Heart left ventricle (tissue), 16 donors: ENCODE measurements at regions of chr17 and their contacts with region 1.

Region 1: DNA sequence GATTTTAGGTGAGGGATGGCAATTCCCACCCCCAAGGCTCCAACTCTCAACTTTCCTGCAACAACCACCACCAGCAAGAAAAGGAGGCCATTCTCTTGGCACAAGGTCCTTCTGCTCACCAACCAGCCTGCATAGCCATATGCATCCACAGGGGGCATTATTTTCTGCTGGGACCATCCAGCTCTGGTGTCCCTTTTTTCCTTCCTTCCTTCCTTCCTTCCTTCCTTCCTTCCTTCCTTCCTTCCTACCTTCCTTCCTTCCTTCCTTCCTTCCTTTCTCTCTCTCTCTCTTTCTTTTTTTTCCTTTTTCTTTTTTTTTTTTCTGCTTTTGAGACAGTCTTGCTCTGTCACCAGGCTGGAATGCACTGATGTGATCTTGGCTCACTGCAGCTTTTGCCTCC is 21.1 kb upstream of the COX10 start:
- DNase-seq: no peak
- ATAC-seq: no peak
- H3K4me3 ChIP-seq: no peak overlapping the region
- H3K27ac ChIP-seq: no peak overlapping the region
- H3K4me1 ChIP-seq: no peaks in the 10 kb centered on the region
- H3K27me3 ChIP-seq: no peaks in the 10 kb centered on the region
- CTCF ChIP-seq: peak in 2 of 12 donors; percentile 23 to 31
- POLR2A ChIP-seq: no peak

Region 2: DNA sequence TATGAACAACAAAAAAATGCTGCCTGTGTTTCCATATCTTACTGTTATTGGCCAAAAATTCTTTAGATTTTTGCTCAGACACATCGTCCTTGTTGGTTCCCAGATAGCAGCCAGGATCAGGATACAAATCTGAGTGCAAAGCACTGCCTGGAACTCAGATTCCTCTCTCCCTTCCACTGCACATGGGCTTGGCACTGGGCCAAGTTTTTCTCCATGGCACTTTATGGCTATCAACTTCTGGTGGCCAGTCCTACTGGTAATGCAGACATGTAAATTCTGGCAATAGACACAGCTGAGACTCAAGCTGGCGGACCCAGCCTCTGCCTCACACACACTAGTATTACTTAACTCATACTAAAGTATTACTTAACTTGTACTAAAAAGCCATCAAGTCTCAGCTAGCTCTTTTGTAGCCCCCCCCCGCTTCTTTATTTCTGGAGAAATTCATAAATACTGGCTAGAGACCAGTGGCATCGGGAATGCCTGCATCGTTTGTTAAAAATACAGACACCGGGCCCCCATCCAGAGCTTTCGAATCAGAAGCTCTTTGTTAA is 160.0 kb before region 1 on chr17:
- intact Hi-C with region 1: no loop called
- DNase-seq: peak in 4 of 5 donors; percentile 26 to 42 (median 32)
- ATAC-seq: no peak
- H3K4me3 ChIP-seq: no peak overlapping the region
- H3K27ac ChIP-seq: no peak overlapping the region
- H3K4me1 ChIP-seq: peaks cover 0 to 14% (median 0%) of the 10 kb centered on the region in 12 donors
- H3K27me3 ChIP-seq: no peaks in the 10 kb centered on the region
- CTCF ChIP-seq: no peak
- POLR2A ChIP-seq: no peak

Region 3: GRCh38 chr17:14004927-14005620 is 43.1 kb before region 1 on chr17:
- intact Hi-C with region 1: no loop called
- DNase-seq: no peak
- ATAC-seq: no peak
- H3K4me3 ChIP-seq: no peak overlapping the region
- H3K27ac ChIP-seq: no peak overlapping the region
- H3K4me1 ChIP-seq: no peaks in the 10 kb centered on the region
- H3K27me3 ChIP-seq: no peaks in the 10 kb centered on the region
- CTCF ChIP-seq: no peak
- POLR2A ChIP-seq: no peak

Region 4: DNA sequence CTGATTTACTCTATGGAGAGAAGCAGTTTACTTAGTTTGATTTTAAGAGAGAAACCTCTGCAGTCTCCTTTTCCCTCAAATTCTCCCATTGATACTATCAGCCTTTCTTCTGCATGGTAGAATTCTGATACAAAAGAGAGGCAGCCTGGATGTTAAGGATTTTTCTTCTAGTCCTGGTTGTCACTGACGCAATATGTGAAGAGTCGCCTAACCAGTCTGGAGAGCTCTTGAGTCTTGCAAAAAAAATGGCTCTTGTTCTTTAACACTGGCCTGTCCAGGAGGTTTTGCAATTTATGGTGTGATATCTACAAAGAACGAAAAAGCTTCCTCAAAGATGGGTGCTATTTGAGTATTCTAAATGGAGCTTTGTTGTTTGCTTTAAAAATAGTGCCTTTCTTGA is 50.1 kb after region 1 on chr17:
- intact Hi-C with region 1: loop called in 1 of 10 experiments (anchors 5 kb)
- DNase-seq: no peak
- ATAC-seq: no peak
- H3K4me3 ChIP-seq: no peak overlapping the region
- H3K27ac ChIP-seq: no peak overlapping the region
- H3K4me1 ChIP-seq: peaks cover 0 to 35% (median 8%) of the 10 kb centered on the region in 12 donors
- H3K27me3 ChIP-seq: no peaks in the 10 kb centered on the region
- CTCF ChIP-seq: no peak
- POLR2A ChIP-seq: no peak